Heart right ventricle (tissue), 16 donors: ENCODE measurements at regions of chr5 and their contacts with region 1.

Region 1: GRCh38 chr5:15285901-15286583 is 213.9 kb upstream of the FBXL7 start:
- DNase-seq: peak in 1 of 2 donors; percentile 32
- ATAC-seq: peak; percentile 38 to 85 (median 82)
- H3K4me3 ChIP-seq: no peak overlapping the region
- H3K27ac ChIP-seq: no peak overlapping the region
- H3K4me1 ChIP-seq: peaks cover 0 to 9% (median 0%) of the 10 kb centered on the region in 9 donors
- H3K27me3 ChIP-seq: no peaks in the 10 kb centered on the region
- CTCF ChIP-seq: no peak

Region 2: DNA sequence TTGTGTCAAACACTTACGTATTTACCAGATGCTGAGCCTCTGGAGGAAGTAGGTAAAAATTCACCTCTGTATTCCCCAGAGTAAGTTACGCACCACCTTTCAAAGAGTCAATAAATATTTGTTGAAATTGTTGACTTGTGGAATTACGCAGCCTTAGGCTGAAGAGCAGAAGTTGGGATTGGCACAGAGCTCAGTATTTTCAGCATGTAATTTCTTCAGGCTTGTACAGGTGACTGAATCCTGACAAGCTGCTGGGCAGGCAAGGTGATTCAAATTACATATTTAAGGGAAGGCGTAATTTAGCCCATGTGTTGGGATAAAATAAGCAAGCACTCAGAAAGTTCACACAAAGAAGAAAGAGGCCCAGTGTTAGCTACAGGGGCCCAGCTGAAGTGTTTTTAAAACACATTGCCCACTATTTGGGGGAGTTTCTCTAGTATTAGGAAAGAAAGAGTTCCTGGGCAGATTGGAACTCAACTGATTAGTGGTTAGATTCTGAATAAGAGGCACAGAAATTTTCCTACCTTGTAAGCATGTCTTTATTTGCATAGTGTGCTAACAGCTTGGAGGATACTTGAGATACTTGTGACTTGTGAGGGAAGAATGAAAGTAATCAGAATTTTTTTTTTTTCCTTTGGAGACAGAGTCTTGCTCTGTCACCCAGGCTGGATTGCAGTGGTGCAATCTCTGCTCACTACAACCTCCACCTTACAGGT is 48.7 kb after region 1 on chr5:
- intact Hi-C with region 1: no loop called
- DNase-seq: no peak
- ATAC-seq: no peak
- H3K4me3 ChIP-seq: no peak overlapping the region
- H3K27ac ChIP-seq: no peak overlapping the region
- H3K4me1 ChIP-seq: no peaks in the 10 kb centered on the region
- H3K27me3 ChIP-seq: no peaks in the 10 kb centered on the region
- CTCF ChIP-seq: no peak

Region 3: GRCh38 chr5:15417156-15417555 is 131.1 kb after region 1 on chr5:
- intact Hi-C with region 1: no loop called
- DNase-seq: no peak
- ATAC-seq: no peak
- H3K4me3 ChIP-seq: no peak overlapping the region
- H3K27ac ChIP-seq: no peak overlapping the region
- H3K4me1 ChIP-seq: no peaks in the 10 kb centered on the region
- H3K27me3 ChIP-seq: no peaks in the 10 kb centered on the region
- CTCF ChIP-seq: no peak

Region 4: DNA sequence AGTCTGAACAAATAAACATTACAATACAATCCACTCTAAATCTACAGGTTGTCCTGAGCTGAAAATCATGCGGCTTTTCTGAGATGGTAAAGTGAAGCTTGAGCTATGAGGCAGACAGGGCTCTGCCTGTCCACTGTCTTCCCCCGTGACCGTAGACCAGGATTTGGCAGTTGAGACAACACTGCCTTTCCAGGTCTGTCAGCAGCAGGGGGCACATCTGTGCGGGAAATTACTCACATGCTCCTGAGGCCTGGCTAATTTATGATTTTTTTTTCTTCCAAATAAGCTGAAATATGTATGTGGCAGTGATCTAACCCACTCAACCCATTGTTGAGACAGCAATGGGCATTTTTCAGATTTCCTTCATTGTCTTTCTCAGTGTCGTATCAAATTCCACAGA is 521.8 kb after region 1 on chr5:
- intact Hi-C with region 1: loop called in 1 of 10 experiments (anchors 10 kb)
- DNase-seq: peak in 1 of 2 donors; percentile 64
- ATAC-seq: peak; percentile 87 to 97 (median 91)
- H3K4me3 ChIP-seq: no peak overlapping the region
- H3K27ac ChIP-seq: peak overlapping the region in 8 of 10 donors; percentile 2 to 68 (median 54)
- H3K4me1 ChIP-seq: peaks cover 0 to 34% (median 23%) of the 10 kb centered on the region in 9 donors
- H3K27me3 ChIP-seq: no peaks in the 10 kb centered on the region
- CTCF ChIP-seq: peak in 6 of 9 donors; percentile 28 to 61 (median 44)